ENCODE measurements at regions of chr11 and their contacts with region 1.

Region 1: GRCh38 chr11:41921746-41922390 is 462.4 kb upstream of the LRRC4C start:
- DNase-seq: no peak
- ATAC-seq: no peak
- H3K4me3 ChIP-seq: no peak overlapping the region
- H3K4me3 Mint-ChIP-seq: no peak overlapping the region
- H3K27ac ChIP-seq: no peak overlapping the region
- H3K27ac Mint-ChIP-seq: no peak overlapping the region
- H3K4me1 ChIP-seq: no peaks in the 10 kb centered on the region
- H3K4me1 Mint-ChIP-seq: no peaks in the 10 kb centered on the region
- H3K27me3 ChIP-seq: no peaks in the 10 kb centered on the region
- H3K27me3 Mint-ChIP-seq: no peaks in the 10 kb centered on the region
- CTCF ChIP-seq: no peak

Region 2: DNA sequence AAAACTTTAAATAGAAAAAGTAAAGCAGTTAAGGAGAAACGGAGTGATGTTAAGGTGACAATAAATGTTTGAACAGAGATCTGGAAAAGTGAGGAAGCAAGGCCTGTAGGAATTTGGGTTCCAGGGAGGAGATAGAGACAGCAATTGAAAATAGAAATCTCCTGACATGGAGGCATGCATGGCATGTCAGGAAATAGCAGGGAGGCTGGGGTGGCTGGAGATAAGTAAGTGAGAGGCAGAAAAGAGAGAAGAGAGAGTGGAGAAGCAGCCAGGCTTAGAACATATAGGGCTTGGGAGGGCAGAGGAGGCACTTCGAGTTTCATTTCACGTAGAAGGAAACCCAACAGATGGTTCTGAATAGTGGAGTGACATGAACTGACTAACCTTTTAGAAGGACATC is 648.0 kb before region 1 on chr11:
- CTCF ChIA-PET with region 1: no interaction called
- POLR2A ChIA-PET with region 1: no interaction called
- intact Hi-C with region 1: no loop called
- DNase-seq: no peak
- ATAC-seq: no peak
- H3K4me3 ChIP-seq: no peak overlapping the region
- H3K4me3 Mint-ChIP-seq: no peak overlapping the region
- H3K27ac ChIP-seq: no peak overlapping the region
- H3K27ac Mint-ChIP-seq: no peak overlapping the region
- H3K4me1 ChIP-seq: no peaks in the 10 kb centered on the region
- H3K4me1 Mint-ChIP-seq: no peaks in the 10 kb centered on the region
- H3K27me3 ChIP-seq: no peaks in the 10 kb centered on the region
- H3K27me3 Mint-ChIP-seq: no peaks in the 10 kb centered on the region
- CTCF ChIP-seq: no peak

Region 3: GRCh38 chr11:41816406-41816805 is 105.5 kb before region 1 on chr11:
- CTCF ChIA-PET with region 1: no interaction called
- POLR2A ChIA-PET with region 1: no interaction called
- intact Hi-C with region 1: no loop called
- DNase-seq: no peak
- ATAC-seq: no peak
- H3K4me3 ChIP-seq: no peak overlapping the region
- H3K4me3 Mint-ChIP-seq: no peak overlapping the region
- H3K27ac ChIP-seq: no peak overlapping the region
- H3K27ac Mint-ChIP-seq: no peak overlapping the region
- H3K4me1 ChIP-seq: no peaks in the 10 kb centered on the region
- H3K4me1 Mint-ChIP-seq: no peaks in the 10 kb centered on the region
- H3K27me3 ChIP-seq: no peaks in the 10 kb centered on the region
- H3K27me3 Mint-ChIP-seq: no peaks in the 10 kb centered on the region
- CTCF ChIP-seq: no peak

Region 4: GRCh38 chr11:41861838-41862237 is 60.0 kb before region 1 on chr11:
- CTCF ChIA-PET with region 1: no interaction called
- POLR2A ChIA-PET with region 1: no interaction called
- intact Hi-C with region 1: loop called in 1 of 2 experiments (anchors 10 kb)
- DNase-seq: no peak
- ATAC-seq: no peak
- H3K4me3 ChIP-seq: no peak overlapping the region
- H3K4me3 Mint-ChIP-seq: no peak overlapping the region
- H3K27ac ChIP-seq: no peak overlapping the region
- H3K27ac Mint-ChIP-seq: no peak overlapping the region
- H3K4me1 ChIP-seq: no peaks in the 10 kb centered on the region
- H3K4me1 Mint-ChIP-seq: no peaks in the 10 kb centered on the region
- H3K27me3 ChIP-seq: no peaks in the 10 kb centered on the region
- H3K27me3 Mint-ChIP-seq: no peaks in the 10 kb centered on the region
- CTCF ChIP-seq: no peak